PC-9 (cell line): ENCODE measurements at regions of chr2 and their contacts with region 1.

Region 1: DNA sequence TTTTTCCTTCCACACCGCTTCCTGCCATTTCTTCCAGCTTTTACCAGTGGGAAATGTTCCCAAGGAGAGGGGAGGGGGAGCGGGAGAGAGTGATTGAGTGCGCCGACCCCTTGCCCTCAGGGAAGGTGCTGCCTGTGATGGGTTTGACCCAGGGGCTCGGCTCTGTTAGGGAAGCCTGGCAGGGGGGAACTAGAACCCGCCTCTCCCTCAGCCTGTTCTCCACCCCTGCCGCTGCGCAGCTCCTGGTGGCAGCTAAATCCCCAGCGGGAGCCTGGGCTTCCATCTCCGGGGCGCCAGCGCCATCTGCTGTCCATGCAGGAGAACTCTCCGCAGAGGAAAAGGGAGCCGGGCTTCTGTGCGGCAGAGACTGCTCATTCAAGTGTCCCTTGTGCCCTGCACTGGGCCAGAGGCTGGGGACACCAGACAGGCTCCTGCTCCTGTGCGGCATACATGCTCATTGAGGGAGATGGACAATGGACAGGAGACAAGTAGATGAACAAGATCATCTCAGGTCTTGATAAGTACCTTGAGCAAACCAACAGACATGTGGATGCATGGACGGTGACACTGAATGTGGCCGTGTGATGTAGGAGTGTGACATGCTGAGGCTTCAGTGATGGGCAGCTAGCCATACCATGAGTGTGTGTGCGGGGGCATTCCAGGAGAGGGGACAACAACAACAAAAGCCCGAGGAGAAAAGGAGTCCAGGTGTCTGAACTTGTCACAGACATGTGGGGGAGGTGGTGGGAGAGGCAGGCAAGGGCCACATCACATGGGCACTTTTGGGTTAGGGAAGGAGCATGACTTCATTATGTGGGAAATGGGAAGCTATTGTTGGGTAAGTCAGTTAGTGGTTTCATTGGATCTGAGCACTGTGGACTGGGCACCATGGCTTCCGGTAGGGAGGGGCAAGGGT is 13.3 kb downstream of the CHPF start:
- DNase-seq: peak; percentile 54 to 84
- H3K4me3 ChIP-seq: no peak overlapping the region
- H3K27ac ChIP-seq: no peak overlapping the region
- H3K4me1 ChIP-seq: no peaks in the 10 kb centered on the region
- H3K27me3 ChIP-seq: peaks cover 33% of the 10 kb centered on the region
- CTCF ChIP-seq: peak; percentile 95

Region 2: GRCh38 chr2:219010162-219010756 is 520.0 kb before region 1 on chr2:
- CTCF ChIA-PET with region 1: no interaction called
- POLR2A ChIA-PET with region 1: no interaction called
- intact Hi-C with region 1: loop called (anchors 5 kb)
- DNase-seq: peak in 1 of 2 experiments; percentile 45
- H3K4me3 ChIP-seq: no peak overlapping the region
- H3K27ac ChIP-seq: no peak overlapping the region
- H3K4me1 ChIP-seq: no peaks in the 10 kb centered on the region
- H3K27me3 ChIP-seq: peaks cover 24% of the 10 kb centered on the region
- CTCF ChIP-seq: peak; percentile 73; the same call in 1 of the 2 replicates

Region 3: DNA sequence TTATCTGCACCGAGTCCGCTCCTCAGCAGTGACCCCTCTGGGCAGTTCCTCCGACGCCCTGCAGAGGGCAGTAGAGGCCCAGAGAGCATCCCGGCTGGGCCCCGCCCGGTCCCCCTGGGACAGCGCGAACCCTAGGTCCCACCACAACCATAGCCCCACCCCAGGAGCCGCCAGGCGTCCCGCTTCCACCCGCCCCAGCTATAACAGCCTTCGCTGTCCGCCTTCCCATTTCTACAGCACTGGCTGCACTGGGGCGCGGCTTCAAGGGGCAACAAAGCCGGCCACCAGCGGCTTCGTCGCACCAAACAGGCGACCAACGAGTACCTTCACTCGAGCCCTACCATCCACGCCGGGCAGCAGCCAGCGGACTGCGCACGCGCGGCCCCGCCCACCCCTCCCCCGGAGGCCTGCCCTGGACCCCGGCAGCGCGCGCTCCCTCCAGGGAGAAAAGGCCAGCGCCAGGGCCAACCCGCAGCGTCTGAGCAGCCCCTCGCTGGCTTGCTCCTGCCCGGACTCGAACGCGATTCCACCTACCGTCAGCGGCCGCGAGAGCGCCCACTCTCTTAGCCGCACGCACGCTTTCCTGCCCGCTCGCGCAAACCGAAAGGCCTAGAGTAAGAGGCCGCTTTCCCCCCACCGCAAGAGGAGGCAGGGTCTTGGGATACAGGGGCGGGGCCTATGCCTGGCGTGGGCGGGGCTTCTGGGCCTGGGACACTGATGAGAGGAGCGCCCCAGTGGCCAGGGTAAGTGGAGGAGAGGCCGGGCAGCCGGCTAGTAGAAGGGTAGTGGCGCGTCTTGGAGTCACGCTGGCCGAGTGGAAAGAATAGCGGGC is 369.9 kb before region 1 on chr2 and contains the start of gene NHEJ1:
- CTCF ChIA-PET with region 1: interaction called, 7 read pairs
- POLR2A ChIA-PET with region 1: no interaction called
- intact Hi-C with region 1: loop called (anchors 1 kb)
- DNase-seq: peak; percentile 79 to 95
- H3K4me3 ChIP-seq: peak within 1 kb of the TSS; percentile 72
- H3K27ac ChIP-seq: peak within 1 kb of the TSS; percentile 57
- H3K4me1 ChIP-seq: 0 out of 2 replicates have a peak, but pooled peaks cover 8% of the 10 kb centered on the region
- H3K27me3 ChIP-seq: no peaks in the 10 kb centered on the region
- CTCF ChIP-seq: peak; percentile 96
- total RNA-seq, gene NHEJ1: 9.8 and 11.2 TPM in 2 replicates

Region 4: GRCh38 chr2:219402665-219403515 is 127.4 kb before region 1 on chr2:
- CTCF ChIA-PET with region 1: interaction called, 19 read pairs
- POLR2A ChIA-PET with region 1: interaction called, 3 read pairs
- intact Hi-C with region 1: loop called (anchors 1 kb)
- DNase-seq: peak; percentile 67 to 78
- H3K4me3 ChIP-seq: no peak overlapping the region
- H3K27ac ChIP-seq: no peak overlapping the region
- H3K4me1 ChIP-seq: peaks cover 36% of the 10 kb centered on the region
- H3K27me3 ChIP-seq: no peaks in the 10 kb centered on the region
- CTCF ChIP-seq: peak; percentile 92

Region 5: GRCh38 chr2:219475697-219476651 is 54.3 kb before region 1 on chr2:
- CTCF ChIA-PET with region 1: no interaction called
- POLR2A ChIA-PET with region 1: no interaction called
- intact Hi-C with region 1: loop called (anchors 1 kb)
- DNase-seq: peak in 1 of 2 experiments; percentile 54
- H3K4me3 ChIP-seq: no peak overlapping the region
- H3K27ac ChIP-seq: no peak overlapping the region
- H3K4me1 ChIP-seq: no peaks in the 10 kb centered on the region
- H3K27me3 ChIP-seq: no peaks in the 10 kb centered on the region
- CTCF ChIP-seq: peak; percentile 79